Naive thymus-derived CD4-positive, alpha-beta T cell (primary cell): ENCODE measurements at regions of chrX and their contacts with region 1.

Region 1: DNA sequence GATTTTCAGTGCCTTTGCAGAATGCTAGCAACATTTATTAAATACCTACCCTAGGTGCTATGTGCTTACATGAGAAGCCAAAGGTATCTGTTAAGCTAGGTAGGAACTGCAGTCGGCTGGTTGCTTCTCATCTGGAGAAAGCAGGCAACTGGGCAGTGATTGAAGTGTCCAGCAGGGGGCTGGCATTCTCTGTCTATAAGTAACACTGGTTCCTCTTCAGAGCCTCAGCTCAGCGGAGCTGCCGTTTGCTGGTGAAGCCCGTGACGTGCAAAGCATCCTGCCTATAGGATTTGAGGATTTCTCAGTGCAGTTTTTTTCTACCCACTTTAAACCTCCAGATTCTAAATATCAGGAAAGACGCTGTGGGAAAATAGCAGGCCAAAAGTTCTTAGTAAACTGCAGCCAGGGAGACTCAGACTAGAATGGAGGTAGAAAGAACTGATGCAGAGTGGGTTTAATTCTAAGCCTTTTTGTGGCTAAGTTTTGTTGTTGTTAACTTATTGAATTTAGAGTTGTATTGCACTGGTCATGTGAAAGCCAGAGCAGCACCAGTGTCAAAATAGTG is at the start of gene GRPR:
- DNase-seq: peak; percentile 20 to 61 (median 48)
- ATAC-seq: peak; percentile 92
- H3K4me3 ChIP-seq: no peak within 1 kb of the TSS
- H3K4me3 Mint-ChIP-seq: peak within 1 kb of the TSS in 4 of 10 donors; percentile 37 to 48 (median 41)
- H3K27ac ChIP-seq: no peak within 1 kb of the TSS
- H3K27ac Mint-ChIP-seq: peak within 1 kb of the TSS in 1 of 9 donors; percentile 10
- H3K4me1 ChIP-seq: no peaks in the 10 kb centered on the region
- H3K4me1 Mint-ChIP-seq: peaks cover 0 to 17% (median 6%) of the 10 kb centered on the region in 7 donors
- H3K27me3 ChIP-seq: no peaks in the 10 kb centered on the region
- H3K27me3 Mint-ChIP-seq: peaks cover 0 to 26% (median under 1%) of the 10 kb centered on the region in 5 donors
- total RNA-seq, gene GRPR: 0.16 to 0.51 (median 0.24) TPM in 3 of 5 experiments, not detected in the others

Region 2: GRCh38 chrX:15686818-15687685 is 436.3 kb before region 1 on chrX:
- CTCF ChIA-PET with region 1: no interaction called
- POLR2A ChIA-PET with region 1: no interaction called
- intact Hi-C with region 1: loop called (anchors 5 to 10 kb)
- DNase-seq: peak; percentile 9 to 78 (median 59)
- ATAC-seq: peak; percentile 95
- H3K4me3 ChIP-seq: no peak overlapping the region
- H3K4me3 Mint-ChIP-seq: no peak overlapping the region
- H3K27ac ChIP-seq: no peak overlapping the region
- H3K27ac Mint-ChIP-seq: peak overlapping the region in 7 of 9 donors; percentile 29 to 86 (median 67)
- H3K4me1 ChIP-seq: no peaks in the 10 kb centered on the region
- H3K4me1 Mint-ChIP-seq: peaks cover 0 to 14% (median 13%) of the 10 kb centered on the region in 7 donors
- H3K27me3 ChIP-seq: no peaks in the 10 kb centered on the region
- H3K27me3 Mint-ChIP-seq: no peaks in the 10 kb centered on the region

Region 3: DNA sequence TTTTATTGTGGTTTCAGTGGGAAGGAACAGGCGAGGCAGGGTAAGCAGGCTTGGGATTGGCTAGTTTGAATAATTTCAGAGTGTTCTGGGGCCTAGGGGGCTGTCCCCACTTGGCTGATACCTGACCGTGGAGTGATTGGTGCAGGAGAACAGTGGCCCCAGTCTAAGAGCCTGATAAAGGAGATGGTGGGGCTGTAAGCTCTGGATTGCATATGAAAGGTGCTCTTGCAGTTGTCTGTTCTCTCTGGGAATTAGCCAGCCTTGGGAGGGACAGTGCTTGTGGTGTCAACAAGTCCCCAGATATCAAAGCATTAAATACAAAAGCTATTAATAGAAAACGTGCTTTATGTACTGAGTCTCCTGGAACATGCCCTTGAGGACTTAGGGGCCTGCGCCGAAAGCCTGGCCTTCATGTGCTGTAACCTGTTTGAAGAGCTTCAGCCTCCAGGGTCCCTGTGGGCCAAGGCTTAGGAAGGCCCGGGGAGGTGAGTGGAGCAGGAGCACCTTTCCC is 428.3 kb before region 1 on chrX:
- CTCF ChIA-PET with region 1: no interaction called
- POLR2A ChIA-PET with region 1: no interaction called
- intact Hi-C with region 1: loop called in 1 of 2 experiments (anchors 10 kb)
- DNase-seq: no peak
- ATAC-seq: no peak
- H3K4me3 ChIP-seq: no peak overlapping the region
- H3K4me3 Mint-ChIP-seq: no peak overlapping the region
- H3K27ac ChIP-seq: no peak overlapping the region
- H3K27ac Mint-ChIP-seq: no peak overlapping the region
- H3K4me1 ChIP-seq: no peaks in the 10 kb centered on the region
- H3K4me1 Mint-ChIP-seq: peaks cover 0 to 5% (median 0%) of the 10 kb centered on the region in 7 donors
- H3K27me3 ChIP-seq: no peaks in the 10 kb centered on the region
- H3K27me3 Mint-ChIP-seq: no peaks in the 10 kb centered on the region

Region 4: GRCh38 chrX:16445166-16445752 is 322.0 kb after region 1 on chrX:
- CTCF ChIA-PET with region 1: no interaction called
- POLR2A ChIA-PET with region 1: no interaction called
- intact Hi-C with region 1: loop called in 1 of 2 experiments (anchors 1 kb)
- DNase-seq: peak; percentile 6 to 57 (median 29)
- ATAC-seq: peak; percentile 72
- H3K4me3 ChIP-seq: no peak overlapping the region
- H3K4me3 Mint-ChIP-seq: no peak overlapping the region
- H3K27ac ChIP-seq: no peak overlapping the region
- H3K27ac Mint-ChIP-seq: no peak overlapping the region
- H3K4me1 ChIP-seq: peaks cover 0 to 17% of the 10 kb centered on the region in 2 donors
- H3K4me1 Mint-ChIP-seq: peaks cover 0 to 39% (median 24%) of the 10 kb centered on the region in 7 donors
- H3K27me3 ChIP-seq: no peaks in the 10 kb centered on the region
- H3K27me3 Mint-ChIP-seq: peaks cover 0 to 3% (median 0%) of the 10 kb centered on the region in 5 donors

Region 5: DNA sequence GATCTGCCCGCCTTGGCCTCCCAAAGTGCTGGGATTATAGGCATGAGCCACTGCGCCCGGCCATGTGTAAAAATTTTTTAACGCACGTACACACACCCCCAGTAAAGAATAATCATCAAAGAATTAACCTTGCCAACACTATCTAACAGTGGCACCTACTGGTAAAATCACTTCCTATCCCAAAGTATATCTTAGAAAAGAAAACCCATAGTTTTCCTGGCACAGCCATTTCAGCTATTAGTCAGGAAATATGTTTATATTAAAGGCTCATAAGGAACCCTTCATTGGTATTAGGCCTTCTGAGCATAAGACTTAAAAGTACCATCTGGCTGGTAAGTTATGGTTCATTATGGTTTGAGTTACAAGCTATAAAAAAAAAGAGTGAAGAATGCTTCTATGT is 540.8 kb after region 1 on chrX:
- CTCF ChIA-PET with region 1: interaction called, 4 read pairs
- POLR2A ChIA-PET with region 1: no interaction called
- intact Hi-C with region 1: loop called in 1 of 2 experiments (anchors 1 kb)
- DNase-seq: peak in 4 of 9 donors; percentile 1 to 32 (median 7)
- ATAC-seq: no peak
- H3K4me3 ChIP-seq: no peak overlapping the region
- H3K4me3 Mint-ChIP-seq: no peak overlapping the region
- H3K27ac ChIP-seq: no peak overlapping the region
- H3K27ac Mint-ChIP-seq: no peak overlapping the region
- H3K4me1 ChIP-seq: no peaks in the 10 kb centered on the region
- H3K4me1 Mint-ChIP-seq: peaks cover 0 to 8% (median 0%) of the 10 kb centered on the region in 7 donors
- H3K27me3 ChIP-seq: no peaks in the 10 kb centered on the region
- H3K27me3 Mint-ChIP-seq: no peaks in the 10 kb centered on the region

Region 6: DNA sequence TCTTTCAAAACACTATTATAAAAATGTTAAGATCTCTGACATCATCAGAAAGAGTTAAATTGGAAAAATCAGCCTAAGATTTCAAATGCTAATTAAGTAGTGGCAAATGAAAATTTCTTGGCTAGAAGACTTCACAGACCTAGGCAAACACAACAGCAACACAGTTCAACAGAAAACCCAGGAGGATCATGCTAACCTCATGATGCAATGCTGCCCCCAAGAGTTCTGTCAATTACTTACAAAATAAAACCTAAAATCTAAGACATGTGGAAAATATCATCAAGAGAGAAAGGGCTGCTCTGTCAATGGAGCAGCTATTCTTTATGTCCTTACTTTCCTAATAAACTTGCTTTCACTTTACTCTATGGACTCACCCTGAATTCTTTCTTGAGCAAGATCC is 547.7 kb after region 1 on chrX:
- CTCF ChIA-PET with region 1: interaction called, 3 read pairs
- POLR2A ChIA-PET with region 1: no interaction called
- intact Hi-C with region 1: loop called in 1 of 2 experiments (anchors 1 kb)
- DNase-seq: peak in 7 of 9 donors; percentile 13 to 57 (median 37)
- ATAC-seq: peak; percentile 64
- H3K4me3 ChIP-seq: no peak overlapping the region
- H3K4me3 Mint-ChIP-seq: no peak overlapping the region
- H3K27ac ChIP-seq: no peak overlapping the region
- H3K27ac Mint-ChIP-seq: peak overlapping the region in 1 of 9 donors; percentile 32
- H3K4me1 ChIP-seq: no peaks in the 10 kb centered on the region
- H3K4me1 Mint-ChIP-seq: peaks cover 0 to 5% (median 0%) of the 10 kb centered on the region in 7 donors
- H3K27me3 ChIP-seq: no peaks in the 10 kb centered on the region
- H3K27me3 Mint-ChIP-seq: no peaks in the 10 kb centered on the region

Region 7: GRCh38 chrX:16695079-16695676 is 571.9 kb after region 1 on chrX:
- CTCF ChIA-PET with region 1: interaction called, 3 read pairs
- POLR2A ChIA-PET with region 1: no interaction called
- intact Hi-C with region 1: loop called in 1 of 2 experiments (anchors 1 kb)
- DNase-seq: peak in 8 of 9 donors; percentile 14 to 62 (median 46)
- ATAC-seq: peak; percentile 84
- H3K4me3 ChIP-seq: no peak overlapping the region
- H3K4me3 Mint-ChIP-seq: no peak overlapping the region
- H3K27ac ChIP-seq: no peak overlapping the region
- H3K27ac Mint-ChIP-seq: peak overlapping the region in 1 of 9 donors; percentile 56
- H3K4me1 ChIP-seq: no peaks in the 10 kb centered on the region
- H3K4me1 Mint-ChIP-seq: peaks cover 0 to 5% (median 0%) of the 10 kb centered on the region in 7 donors
- H3K27me3 ChIP-seq: no peaks in the 10 kb centered on the region
- H3K27me3 Mint-ChIP-seq: no peaks in the 10 kb centered on the region